ENCODE measurements at regions of chr6 and their contacts with region 1.

Region 1: GRCh38 chr6:31580807-31581433 is 1.3 kb downstream of the LTB start:
- H3K4me3 ChIP-seq: peak overlapping the region; percentile 44
- H3K27ac ChIP-seq: peak overlapping the region; percentile 34; the same call in 1 of the 2 replicates
- H3K4me1 ChIP-seq: peaks cover 4% of the 10 kb centered on the region; the same call in 1 of the 2 replicates
- CTCF ChIP-seq: peak; percentile 98

Region 2: GRCh38 chr6:31114540-31114876 is 466.4 kb before region 1 on chr6 and contains the start of gene PSORS1C1:
- CTCF ChIA-PET with region 1: no interaction called
- POLR2A ChIA-PET with region 1: no interaction called
- H3K4me3 ChIP-seq: no peak within 1 kb of the TSS
- H3K27ac ChIP-seq: no peak within 1 kb of the TSS
- H3K4me1 ChIP-seq: peaks cover 7% of the 10 kb centered on the region
- CTCF ChIP-seq: no peak

Region 3: GRCh38 chr6:31412506-31412905 is 168.4 kb before region 1 on chr6:
- CTCF ChIA-PET with region 1: no interaction called
- POLR2A ChIA-PET with region 1: no interaction called
- H3K4me3 ChIP-seq: no peak overlapping the region
- H3K27ac ChIP-seq: no peak overlapping the region
- H3K4me1 ChIP-seq: no peaks in the 10 kb centered on the region; the same call in 1 of the 2 replicates
- CTCF ChIP-seq: no peak

Region 4: DNA sequence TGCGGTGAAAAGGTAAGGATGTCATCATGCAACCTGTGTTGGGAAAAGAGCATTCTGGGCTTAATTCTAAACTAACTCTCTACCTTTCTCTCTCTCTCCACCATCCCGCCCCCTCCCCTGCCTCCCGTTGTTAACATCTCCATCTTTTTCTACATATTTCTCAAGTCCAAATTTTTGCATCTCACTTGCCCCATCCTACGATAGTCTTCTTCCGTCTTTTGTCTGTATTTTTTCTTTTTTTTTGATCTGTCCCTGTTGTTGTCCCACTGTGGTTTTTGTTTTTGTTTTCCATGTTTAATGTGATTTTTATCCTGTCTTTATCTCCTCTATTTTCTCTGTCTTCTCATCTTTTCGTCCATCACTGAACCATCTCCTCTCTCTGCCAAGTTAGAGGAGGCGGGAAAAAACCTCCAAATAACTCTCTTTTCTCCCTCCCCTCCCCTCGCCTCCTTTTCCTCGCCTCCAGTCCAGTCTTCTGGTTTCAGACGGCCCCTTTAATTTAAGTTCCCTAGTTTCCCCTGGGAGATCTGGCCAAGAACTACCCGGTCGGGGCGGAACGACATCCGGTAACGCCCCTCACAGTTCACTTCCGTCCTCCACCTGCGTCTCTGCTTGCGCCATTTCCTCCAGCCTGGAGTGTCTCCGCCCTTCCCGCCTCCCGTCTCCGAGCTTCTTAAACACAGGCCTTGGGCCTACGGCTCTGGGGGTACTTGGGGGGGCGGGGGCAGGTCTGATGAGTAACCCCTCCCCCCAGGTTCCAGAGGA is 33.8 kb before region 1 on chr6 and contains the start of gene NFKBIL1:
- CTCF ChIA-PET with region 1: interaction called, 65 read pairs
- POLR2A ChIA-PET with region 1: interaction called, 7 read pairs
- H3K4me3 ChIP-seq: peak within 1 kb of the TSS; percentile 47
- H3K27ac ChIP-seq: peak within 1 kb of the TSS; percentile 50
- H3K4me1 ChIP-seq: peaks cover 2% of the 10 kb centered on the region; the same call in 1 of the 2 replicates
- CTCF ChIP-seq: no peak; the same call in 1 of the 2 replicates

Region 5: GRCh38 chr6:31568537-31568961 is 12.4 kb before region 1 on chr6:
- CTCF ChIA-PET with region 1: interaction called, 71 read pairs
- POLR2A ChIA-PET with region 1: interaction called, 5 read pairs
- H3K4me3 ChIP-seq: no peak overlapping the region
- H3K27ac ChIP-seq: no peak overlapping the region
- H3K4me1 ChIP-seq: no peaks in the 10 kb centered on the region
- CTCF ChIP-seq: no peak

Region 6: DNA sequence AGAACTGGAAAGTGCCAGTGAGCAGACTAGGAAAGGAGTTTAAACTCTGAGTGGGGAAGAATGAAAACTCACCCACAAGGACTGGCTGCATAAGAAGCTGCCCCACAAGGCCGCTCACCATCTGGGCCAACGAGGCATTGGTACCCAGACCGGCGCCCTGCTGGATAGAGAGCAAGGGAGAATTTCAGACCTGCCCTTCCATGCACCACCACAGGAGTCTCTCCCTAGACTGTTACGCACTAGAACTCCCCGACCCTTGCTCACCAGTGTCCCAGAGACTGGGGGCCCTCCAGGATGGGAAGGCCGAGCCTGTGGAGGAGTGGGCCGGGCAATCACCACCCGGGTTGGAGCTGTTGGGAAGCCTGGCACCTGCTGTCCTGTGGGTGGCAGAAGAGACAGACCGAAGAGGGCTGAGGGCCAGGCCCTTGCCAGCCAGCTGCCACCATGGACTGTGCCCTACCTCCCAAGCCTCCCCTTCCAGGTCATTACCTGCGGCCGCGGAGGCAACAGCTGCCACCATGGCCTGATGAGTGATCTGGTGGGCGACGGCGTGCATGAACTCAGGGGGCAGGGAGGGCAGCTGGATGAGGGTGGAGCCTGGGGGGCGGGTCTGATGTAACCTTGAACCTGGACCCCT is 63.0 kb after region 1 on chr6:
- CTCF ChIA-PET with region 1: no interaction called
- POLR2A ChIA-PET with region 1: no interaction called
- H3K4me3 ChIP-seq: no peak overlapping the region
- H3K27ac ChIP-seq: no peak overlapping the region
- H3K4me1 ChIP-seq: no peaks in the 10 kb centered on the region
- CTCF ChIP-seq: no peak